ENCODE measurements at regions of chr3 and their contacts with region 1.

Region 1: GRCh38 chr3:25863416-25863959 is 73.6 kb downstream of the OXSM start:
- DNase-seq: no peak
- H3K4me3 ChIP-seq: no peak overlapping the region
- H3K27ac ChIP-seq: no peak overlapping the region
- H3K27me3 ChIP-seq: no peaks in the 10 kb centered on the region
- CTCF ChIP-seq: peak in 2 of 56 donors; percentile 10 to 16

Region 2: DNA sequence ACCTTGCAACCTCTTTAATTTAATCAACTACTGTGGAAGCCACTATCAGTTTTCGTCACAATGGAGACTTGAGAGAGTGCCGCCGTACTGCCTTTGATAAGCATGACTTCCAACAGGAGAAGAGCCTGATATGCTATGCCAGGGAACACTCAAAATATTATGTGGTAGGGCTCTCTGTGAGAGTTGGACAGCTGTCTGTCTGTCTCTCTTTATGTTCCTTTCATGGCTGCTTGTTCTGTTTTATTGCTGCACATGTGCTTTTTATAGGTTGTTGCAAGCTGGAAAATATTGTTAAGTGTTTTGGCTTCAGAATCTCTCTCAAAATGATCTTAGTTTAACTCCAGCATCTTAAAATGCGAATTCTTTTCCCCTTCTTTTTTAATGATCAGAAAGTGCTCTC is 684.8 kb before region 1 on chr3:
- intact Hi-C with region 1: no loop called
- DNase-seq: no peak
- H3K4me3 ChIP-seq: no peak overlapping the region
- H3K27ac ChIP-seq: no peak overlapping the region
- H3K27me3 ChIP-seq: no peaks in the 10 kb centered on the region
- CTCF ChIP-seq: no peak

Region 3: DNA sequence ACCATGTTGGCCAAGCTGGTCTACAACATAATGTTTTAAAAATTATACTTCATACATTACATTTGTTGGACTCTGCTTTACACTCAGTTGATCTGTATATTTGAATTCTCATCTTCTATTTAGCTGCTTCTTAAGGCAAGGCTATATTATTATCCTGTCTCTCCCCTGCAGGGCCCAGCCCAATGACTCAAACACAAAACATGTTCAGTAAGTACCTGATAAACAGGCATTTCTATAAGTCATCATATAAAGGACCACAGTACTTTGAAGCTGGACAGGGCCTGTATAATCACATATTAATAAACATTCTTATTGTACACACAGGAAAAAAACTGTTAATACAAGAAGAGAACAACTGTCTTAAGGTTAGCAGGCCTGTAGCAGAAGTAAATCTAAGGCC is 116.5 kb before region 1 on chr3:
- intact Hi-C with region 1: no loop called
- DNase-seq: no peak
- H3K4me3 ChIP-seq: no peak overlapping the region
- H3K27ac ChIP-seq: no peak overlapping the region
- H3K27me3 ChIP-seq: no peaks in the 10 kb centered on the region
- CTCF ChIP-seq: no peak

Region 4: DNA sequence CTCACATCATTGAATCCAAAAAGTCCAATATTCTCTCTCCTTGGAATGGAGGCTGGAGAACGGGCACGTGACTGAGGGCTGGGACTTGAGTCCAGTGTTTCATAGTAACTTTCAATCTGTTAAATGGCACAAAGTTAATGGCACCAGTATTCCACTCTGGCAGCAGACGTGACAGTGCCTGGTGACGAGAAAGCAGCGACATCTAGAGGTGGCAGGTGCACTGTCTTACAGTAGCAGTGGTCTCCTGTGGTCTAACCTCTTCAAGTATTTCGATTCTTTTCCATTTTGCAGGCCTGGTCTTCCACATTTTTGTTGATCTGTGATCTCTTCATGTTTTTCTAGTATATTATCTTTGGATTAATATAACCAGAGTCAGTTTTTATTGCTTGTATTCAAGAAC is 33.5 kb after region 1 on chr3:
- intact Hi-C with region 1: loop called in 1 of 2 experiments (anchors 2 kb)
- DNase-seq: no peak
- H3K4me3 ChIP-seq: no peak overlapping the region
- H3K27ac ChIP-seq: no peak overlapping the region
- H3K27me3 ChIP-seq: no peaks in the 10 kb centered on the region
- CTCF ChIP-seq: no peak

Measured in dorsolateral prefrontal cortex (tissue), 120 donors.